GM12878 (cell line): ENCODE measurements at regions of chr1 and their contacts with region 1.

Region 1: DNA sequence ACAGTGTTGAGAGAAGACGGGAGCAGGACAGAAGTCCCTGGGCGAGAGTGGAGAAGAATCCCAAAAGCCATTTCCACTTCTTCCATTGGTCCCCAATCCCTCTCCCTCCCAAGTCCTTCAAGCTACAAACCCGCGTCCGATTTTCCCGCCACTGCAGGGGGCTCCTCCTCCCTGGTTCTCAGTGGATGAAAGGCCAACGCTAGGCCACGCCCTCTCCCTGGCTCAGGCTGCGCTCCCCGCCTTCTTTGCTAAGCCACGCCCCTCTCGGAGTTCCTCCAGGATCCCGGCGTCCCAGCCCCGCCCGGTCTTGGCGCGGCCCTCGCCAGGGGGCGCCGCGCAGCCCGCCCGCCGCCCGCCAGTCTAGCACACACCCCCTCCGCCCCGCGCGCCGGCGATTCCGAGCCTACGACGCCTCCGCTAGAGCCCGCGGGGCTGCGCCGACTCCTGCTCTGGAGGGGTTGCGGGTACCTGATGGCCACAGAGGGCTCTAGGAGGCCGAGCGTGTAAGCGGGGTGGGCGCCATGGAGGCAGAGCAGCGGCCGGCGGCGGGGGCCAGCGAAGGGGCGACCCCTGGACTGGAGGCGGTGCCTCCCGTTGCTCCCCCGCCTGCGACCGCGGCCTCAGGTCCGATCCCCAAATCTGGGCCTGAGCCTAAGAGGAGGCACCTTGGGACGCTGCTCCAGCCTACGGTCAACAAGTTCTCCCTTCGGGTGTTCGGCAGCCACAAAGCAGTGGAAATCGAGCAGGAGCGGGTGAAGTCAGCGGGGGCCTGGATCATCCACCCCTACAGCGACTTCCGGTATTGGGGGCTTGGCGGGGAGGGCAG is at the start of gene HCN3:
- DNase-seq: peak; percentile 79
- ATAC-seq: peak; percentile 78
- H3K4me3 ChIP-seq: peak within 1 kb of the TSS; percentile 82
- H3K27ac ChIP-seq: no peak within 1 kb of the TSS
- H3K4me1 ChIP-seq: peaks cover 13% of the 10 kb centered on the region
- H3K27me3 ChIP-seq: no peaks in the 10 kb centered on the region
- CTCF ChIP-seq: peak; percentile 46 to 72 (median 54); a peak in 5 of 6 replicates
- EP300 ChIP-seq: no peak
- POLR2A ChIP-seq: no peak
- RAD21 ChIP-seq: peak; percentile 24; the same call in 1 of the 2 replicates
- polyA plus RNA-seq, gene HCN3: 0.08 to 0.31 TPM

Region 2: GRCh38 chr1:155261852-155262673 is 15.2 kb before region 1 on chr1 and contains the start of gene SCAMP3:
- CTCF ChIA-PET with region 1: interaction called, 5 read pairs
- POLR2A ChIA-PET with region 1: interaction called, 13 read pairs
- RAD21 ChIA-PET with region 1: interaction called, 5 read pairs
- SMC1A ChIA-PET with region 1: interaction called, 11 read pairs
- in situ Hi-C with region 1: no loop called
- intact Hi-C with region 1: no loop called
- DNase-seq: peak; percentile 96
- ATAC-seq: peak; percentile 98
- H3K4me3 ChIP-seq: peak within 1 kb of the TSS; percentile 77
- H3K27ac ChIP-seq: peak within 1 kb of the TSS; percentile 84
- H3K4me1 ChIP-seq: peaks cover 7% of the 10 kb centered on the region
- H3K27me3 ChIP-seq: no peaks in the 10 kb centered on the region
- CTCF ChIP-seq: no peak
- EP300 ChIP-seq: no peak
- POLR2A ChIP-seq: peak; percentile 94
- RAD21 ChIP-seq: no peak
- polyA plus RNA-seq, gene SCAMP3: 55.1 to 84.1 TPM

Region 3: DNA sequence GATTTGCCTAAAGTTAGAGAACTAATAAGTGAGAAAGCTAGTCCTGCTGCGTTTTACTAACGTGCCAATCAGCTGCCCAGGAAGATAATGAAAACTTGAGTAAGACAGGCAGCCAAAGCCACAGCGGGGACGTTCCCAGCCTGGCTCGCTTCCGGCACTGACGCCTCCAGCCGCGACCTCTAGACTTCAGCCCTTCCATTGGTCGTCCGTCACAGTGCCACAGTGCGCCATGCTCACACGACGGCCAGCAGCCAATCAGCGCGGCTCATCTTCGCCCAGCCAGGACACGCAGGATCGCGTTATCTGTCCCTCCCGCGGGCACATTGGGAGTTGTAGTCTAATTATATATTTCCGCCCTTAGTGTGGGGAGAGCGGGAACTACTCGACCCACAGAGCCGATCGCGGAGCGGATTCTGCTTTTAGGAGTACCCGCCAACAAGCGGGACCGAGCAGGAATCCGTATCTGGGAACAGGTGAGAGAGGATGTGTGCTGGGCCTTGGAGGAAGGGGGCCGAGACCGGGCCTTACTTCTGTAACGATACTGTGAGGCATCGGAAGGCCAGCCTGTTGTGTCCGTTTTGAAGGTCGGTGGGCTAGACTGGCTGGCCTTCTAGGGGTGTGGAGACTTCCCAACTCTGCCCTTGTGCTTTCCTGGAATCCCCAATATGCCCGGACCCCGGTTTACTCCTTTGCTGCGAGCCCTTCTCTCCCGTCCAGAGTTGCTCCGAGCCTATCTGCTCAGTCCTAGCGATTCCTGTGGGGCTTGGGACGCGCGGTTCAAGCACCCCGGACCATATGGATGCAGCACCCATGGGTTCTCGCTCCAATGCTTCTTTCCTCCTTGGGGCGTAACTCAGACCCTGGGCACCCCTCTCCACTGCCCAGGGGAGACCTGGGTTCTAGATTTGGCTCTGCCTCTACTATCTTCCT is 31.5 kb after region 1 on chr1 and contains the start of gene FDPS:
- CTCF ChIA-PET with region 1: interaction called, 13 read pairs
- POLR2A ChIA-PET with region 1: interaction called, 41 read pairs
- RAD21 ChIA-PET with region 1: interaction called, 12 read pairs
- SMC1A ChIA-PET with region 1: interaction called, 3 read pairs
- in situ Hi-C with region 1: no loop called
- intact Hi-C with region 1: loop called (anchors 1 kb)
- DNase-seq: peak; percentile 99
- ATAC-seq: peak; percentile 95
- H3K4me3 ChIP-seq: peak within 1 kb of the TSS; percentile 96
- H3K27ac ChIP-seq: peak within 1 kb of the TSS; percentile 99
- H3K4me1 ChIP-seq: peaks cover 14% of the 10 kb centered on the region
- H3K27me3 ChIP-seq: no peaks in the 10 kb centered on the region
- CTCF ChIP-seq: no peak
- EP300 ChIP-seq: 0 out of 4 replicates have a peak, but pooled peaks of 1 of the 2 experiments have one; percentile 48
- POLR2A ChIP-seq: peak; percentile 84
- RAD21 ChIP-seq: no peak
- polyA plus RNA-seq, gene FDPS: 1,058 to 1,156 TPM